ENCODE measurements at regions of chr12 and their contacts with region 1.

Region 1: GRCh38 chr12:106955377-106956047 is at the start of gene TMEM263:
- DNase-seq: peak; percentile 78 to 91 (median 86)
- ATAC-seq: peak; percentile 90
- H3K4me3 ChIP-seq: peak within 1 kb of the TSS; percentile 94
- H3K4me3 Mint-ChIP-seq: peak within 1 kb of the TSS; percentile 88 to 99 (median 96)
- H3K27ac ChIP-seq: peak within 1 kb of the TSS; percentile 94
- H3K27ac Mint-ChIP-seq: peak within 1 kb of the TSS; percentile 93 to 97 (median 96)
- H3K4me1 ChIP-seq: peaks cover 8 to 10% of the 10 kb centered on the region in 2 donors
- H3K4me1 Mint-ChIP-seq: peaks cover 17 to 57% (median 38%) of the 10 kb centered on the region in 7 donors
- H3K27me3 ChIP-seq: no peaks in the 10 kb centered on the region
- H3K27me3 Mint-ChIP-seq: peaks cover 0 to 11% (median 0%) of the 10 kb centered on the region in 5 donors
- total RNA-seq, gene TMEM263: 20.0 to 45.5 (median 31.5) TPM

Region 2: DNA sequence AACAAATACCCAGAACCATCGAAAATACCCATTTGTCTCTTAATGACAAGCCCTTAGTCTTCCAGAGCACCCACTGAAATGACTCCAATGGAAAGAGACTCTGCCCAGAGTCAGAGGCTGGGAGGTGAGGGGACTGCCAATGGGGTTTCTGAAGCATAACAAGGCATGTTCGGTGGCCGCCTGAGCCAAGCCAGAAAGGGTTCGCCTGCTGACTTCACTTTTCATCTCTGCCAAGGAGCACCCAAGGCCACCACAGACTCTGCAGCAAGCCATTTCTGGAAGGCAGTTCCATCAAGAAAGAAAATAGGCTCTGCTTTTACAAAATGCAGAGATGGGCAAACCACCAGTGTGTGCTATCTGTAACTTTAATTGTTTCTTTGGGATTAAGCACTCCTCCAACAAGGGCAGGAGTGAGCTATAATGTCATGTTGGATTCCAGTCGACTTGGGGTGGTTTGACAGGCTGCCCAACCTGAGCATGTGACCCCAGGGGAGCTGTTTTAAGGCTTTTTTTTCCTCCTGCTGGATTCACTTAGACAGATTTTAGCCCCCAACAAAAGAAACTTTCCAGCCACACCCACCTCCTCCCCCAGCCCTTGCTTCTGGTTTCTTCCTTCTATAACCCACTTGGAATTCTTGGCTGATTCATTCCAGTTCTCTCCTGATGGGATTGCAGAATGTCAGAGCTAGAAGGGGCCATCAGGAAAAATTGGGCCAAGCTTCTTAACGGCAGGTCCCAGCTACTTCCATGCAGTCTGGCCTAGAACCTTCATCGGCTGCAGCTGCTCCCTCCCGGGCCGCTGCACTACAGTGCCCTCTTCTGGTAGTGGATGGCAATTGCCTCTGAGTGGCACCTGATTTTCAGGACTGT is 731.8 kb before region 1 on chr12:
- CTCF ChIA-PET with region 1: no interaction called
- POLR2A ChIA-PET with region 1: no interaction called
- intact Hi-C with region 1: loop called in 1 of 2 experiments (anchors 10 kb)
- DNase-seq: peak; percentile 41 to 80 (median 66)
- ATAC-seq: peak; percentile 78
- H3K4me3 ChIP-seq: no peak overlapping the region
- H3K4me3 Mint-ChIP-seq: peak overlapping the region in 3 of 10 donors; percentile 14 to 67 (median 33)
- H3K27ac ChIP-seq: no peak overlapping the region
- H3K27ac Mint-ChIP-seq: peak overlapping the region in 1 of 9 donors; percentile 49
- H3K4me1 ChIP-seq: peaks cover 0 to 13% of the 10 kb centered on the region in 2 donors
- H3K4me1 Mint-ChIP-seq: peaks cover 12 to 22% (median 19%) of the 10 kb centered on the region in 7 donors
- H3K27me3 ChIP-seq: no peaks in the 10 kb centered on the region
- H3K27me3 Mint-ChIP-seq: peaks cover 4 to 20% (median 10%) of the 10 kb centered on the region in 5 donors

Region 3: GRCh38 chr12:106581543-106582248 is 373.8 kb before region 1 on chr12:
- CTCF ChIA-PET with region 1: no interaction called
- POLR2A ChIA-PET with region 1: no interaction called
- intact Hi-C with region 1: no loop called
- DNase-seq: no peak
- ATAC-seq: no peak
- H3K4me3 ChIP-seq: no peak overlapping the region
- H3K4me3 Mint-ChIP-seq: peak overlapping the region; percentile 4 to 89 (median 74)
- H3K27ac ChIP-seq: no peak overlapping the region
- H3K27ac Mint-ChIP-seq: no peak overlapping the region
- H3K4me1 ChIP-seq: no peaks in the 10 kb centered on the region
- H3K4me1 Mint-ChIP-seq: peaks cover 12 to 40% (median 30%) of the 10 kb centered on the region in 7 donors
- H3K27me3 ChIP-seq: peaks cover 0 to 9% of the 10 kb centered on the region in 2 donors
- H3K27me3 Mint-ChIP-seq: peaks cover 71 to 85% (median 78%) of the 10 kb centered on the region in 5 donors

Region 4: DNA sequence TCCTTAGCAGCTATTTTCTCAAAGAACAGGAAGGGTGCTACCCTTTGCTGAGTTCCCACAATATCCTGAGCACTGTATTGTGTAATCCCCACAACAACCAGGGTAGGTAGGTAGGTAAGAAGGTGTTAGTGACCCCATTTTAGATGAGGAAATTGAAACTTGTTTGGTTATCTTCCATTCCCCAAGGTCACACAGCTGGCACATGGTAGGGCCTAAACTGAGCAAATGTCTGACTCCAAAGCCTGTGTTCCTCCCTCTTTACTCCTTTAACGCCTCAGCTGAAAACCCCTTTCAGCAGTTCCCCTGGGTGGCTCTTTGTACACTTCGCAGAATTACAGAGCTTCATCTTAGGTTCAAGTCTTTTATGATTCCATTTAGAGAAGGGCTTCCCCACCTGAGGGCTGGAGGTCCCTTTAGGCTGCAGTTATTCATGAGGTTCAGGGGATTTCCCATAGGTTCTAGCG is 207.5 kb before region 1 on chr12:
- CTCF ChIA-PET with region 1: no interaction called
- POLR2A ChIA-PET with region 1: no interaction called
- intact Hi-C with region 1: loop called in 1 of 2 experiments (anchors 5 kb)
- DNase-seq: peak in 7 of 9 donors; percentile 46 to 84 (median 77)
- ATAC-seq: peak; percentile 94
- H3K4me3 ChIP-seq: no peak overlapping the region
- H3K4me3 Mint-ChIP-seq: peak overlapping the region; percentile 26 to 82 (median 50)
- H3K27ac ChIP-seq: peak overlapping the region; percentile 68
- H3K27ac Mint-ChIP-seq: peak overlapping the region; percentile 82 to 98 (median 93)
- H3K4me1 ChIP-seq: peaks cover 19 to 31% of the 10 kb centered on the region in 2 donors
- H3K4me1 Mint-ChIP-seq: peaks cover 20 to 37% (median 26%) of the 10 kb centered on the region in 7 donors
- H3K27me3 ChIP-seq: no peaks in the 10 kb centered on the region
- H3K27me3 Mint-ChIP-seq: peaks cover 0 to 19% (median 5%) of the 10 kb centered on the region in 5 donors

Region 5: GRCh38 chr12:106919910-106920544 is 35.5 kb before region 1 on chr12:
- CTCF ChIA-PET with region 1: interaction called, 3 read pairs
- POLR2A ChIA-PET with region 1: no interaction called
- intact Hi-C with region 1: loop called in 1 of 2 experiments (anchors 1 kb)
- DNase-seq: peak in 7 of 9 donors; percentile 12 to 53 (median 32)
- ATAC-seq: peak; percentile 60
- H3K4me3 ChIP-seq: no peak overlapping the region
- H3K4me3 Mint-ChIP-seq: no peak overlapping the region
- H3K27ac ChIP-seq: no peak overlapping the region
- H3K27ac Mint-ChIP-seq: no peak overlapping the region
- H3K4me1 ChIP-seq: peaks cover 0 to under 1% of the 10 kb centered on the region in 2 donors
- H3K4me1 Mint-ChIP-seq: peaks cover 8 to 15% (median 9%) of the 10 kb centered on the region in 7 donors
- H3K27me3 ChIP-seq: no peaks in the 10 kb centered on the region
- H3K27me3 Mint-ChIP-seq: peaks cover 5 to 50% (median 14%) of the 10 kb centered on the region in 5 donors

Region 6: GRCh38 chr12:107372229-107372658 is 416.7 kb after region 1 on chr12:
- CTCF ChIA-PET with region 1: no interaction called
- POLR2A ChIA-PET with region 1: no interaction called
- intact Hi-C with region 1: loop called in 1 of 2 experiments (anchors 2 kb)
- DNase-seq: peak in 8 of 9 donors; percentile 37 to 74 (median 68)
- ATAC-seq: peak; percentile 76
- H3K4me3 ChIP-seq: peak overlapping the region; percentile 20
- H3K4me3 Mint-ChIP-seq: peak overlapping the region; percentile 63 to 85 (median 81)
- H3K27ac ChIP-seq: peak overlapping the region; percentile 64
- H3K27ac Mint-ChIP-seq: peak overlapping the region; percentile 88 to 96 (median 94)
- H3K4me1 ChIP-seq: peaks cover 50 to 73% of the 10 kb centered on the region in 2 donors
- H3K4me1 Mint-ChIP-seq: peaks cover 68 to 89% (median 86%) of the 10 kb centered on the region in 7 donors
- H3K27me3 ChIP-seq: no peaks in the 10 kb centered on the region
- H3K27me3 Mint-ChIP-seq: no peaks in the 10 kb centered on the region

Measured in naive thymus-derived CD4-positive, alpha-beta T cell (primary cell).